Right cardiac atrium (tissue), 5 donors: ENCODE measurements at regions of chr17 and their contacts with region 1.

Region 1: GRCh38 chr17:77145612-77146245 is 5.0 kb downstream of the SEC14L1 start:
- DNase-seq: peak; percentile 80 to 86 (median 83)
- ATAC-seq: peak; percentile 74
- H3K4me3 ChIP-seq: peak overlapping the region; percentile 9
- H3K27ac ChIP-seq: peak overlapping the region; percentile 94
- H3K4me1 ChIP-seq: peaks cover 19% of the 10 kb centered on the region
- H3K27me3 ChIP-seq: no peaks in the 10 kb centered on the region

Region 2: DNA sequence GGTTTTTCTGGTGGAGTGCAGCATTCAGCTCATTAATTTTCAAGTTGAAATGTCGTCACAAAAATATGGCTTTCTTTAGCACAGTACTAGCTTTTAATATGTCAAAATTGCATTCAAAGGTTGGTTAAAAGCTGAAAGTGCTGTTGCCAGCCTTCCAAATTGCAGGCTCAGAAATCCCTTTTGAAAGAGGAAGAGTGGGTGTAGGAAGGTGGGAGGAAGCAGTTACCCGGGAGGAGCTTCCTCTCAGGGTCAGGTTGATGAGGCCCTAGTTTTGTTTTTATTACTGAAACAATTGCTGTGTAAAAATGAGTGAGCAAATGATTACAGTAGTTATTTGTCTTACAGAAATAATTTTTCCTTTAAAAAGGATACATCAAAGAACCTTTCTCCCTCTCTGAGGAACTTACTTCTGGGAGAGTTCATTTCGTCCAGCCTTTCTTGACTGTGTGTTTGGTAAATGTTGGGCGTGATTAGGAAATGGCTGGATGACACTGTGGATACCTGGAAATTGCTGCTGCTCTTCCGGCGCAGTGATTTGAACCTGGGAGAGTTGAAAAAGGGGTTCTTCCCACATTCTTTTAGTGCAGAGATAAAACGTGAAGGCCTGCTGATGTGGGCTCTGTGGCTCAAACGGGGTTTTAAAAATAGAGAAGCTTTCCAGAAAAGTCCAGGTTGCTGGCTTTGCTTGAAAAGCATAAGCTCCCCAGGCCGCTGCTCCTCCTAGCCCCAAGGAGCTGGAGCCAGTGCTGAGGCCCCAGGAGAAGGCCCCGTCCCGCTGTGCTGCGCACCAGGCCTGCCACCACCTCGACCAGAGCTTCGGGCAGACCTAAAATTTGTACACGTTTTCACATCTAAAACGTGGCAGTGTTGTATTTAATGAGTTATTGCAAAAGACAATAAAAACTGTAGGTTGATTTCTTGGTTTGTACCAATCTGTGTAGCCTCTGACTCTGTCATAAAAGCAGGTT is 36.8 kb after region 1 on chr17:
- intact Hi-C with region 1: loop called in 1 of 4 experiments (anchors 5 kb)
- DNase-seq: no peak
- ATAC-seq: peak in 1 of 2 donors; percentile 31
- H3K4me3 ChIP-seq: no peak overlapping the region
- H3K27ac ChIP-seq: peak overlapping the region; percentile 59
- H3K4me1 ChIP-seq: peaks cover 19% of the 10 kb centered on the region
- H3K27me3 ChIP-seq: no peaks in the 10 kb centered on the region

Region 3: GRCh38 chr17:77331301-77331864 is 185.7 kb after region 1 on chr17:
- intact Hi-C with region 1: no loop called
- DNase-seq: peak; percentile 92 to 97 (median 97)
- ATAC-seq: peak; percentile 88 to 91
- H3K4me3 ChIP-seq: no peak overlapping the region
- H3K27ac ChIP-seq: no peak overlapping the region
- H3K4me1 ChIP-seq: peaks cover 2% of the 10 kb centered on the region
- H3K27me3 ChIP-seq: no peaks in the 10 kb centered on the region